Ovary (tissue), 10 donors: ENCODE measurements at regions of chr1 and their contacts with region 1.

Region 1: GRCh38 chr1:77978969-77979876 is at the start of gene FUBP1:
- DNase-seq: peak; percentile 95 to 98 (median 95)
- H3K4me3 ChIP-seq: peak within 1 kb of the TSS; percentile 60
- H3K27ac ChIP-seq: peak within 1 kb of the TSS; percentile 84 to 93
- H3K4me1 ChIP-seq: peaks cover 3% of the 10 kb centered on the region
- H3K27me3 ChIP-seq: no peaks in the 10 kb centered on the region
- CTCF ChIP-seq: peak; percentile 78 to 88 (median 85)
- EP300 ChIP-seq: no peak
- POLR2A ChIP-seq: peak; percentile 75
- total RNA-seq, gene FUBP1: 95.6 to 169 (median 149) TPM

Region 2: GRCh38 chr1:77857552-77857951 is 121.7 kb before region 1 on chr1:
- intact Hi-C with region 1: no loop called
- DNase-seq: no peak
- H3K4me3 ChIP-seq: no peak overlapping the region
- H3K27ac ChIP-seq: no peak overlapping the region
- H3K4me1 ChIP-seq: peaks cover 1% of the 10 kb centered on the region
- H3K27me3 ChIP-seq: no peaks in the 10 kb centered on the region
- CTCF ChIP-seq: no peak
- EP300 ChIP-seq: no peak
- POLR2A ChIP-seq: no peak

Region 3: GRCh38 chr1:78004719-78005447 is 25.7 kb after region 1 on chr1 and contains the start of gene DNAJB4:
- intact Hi-C with region 1: loop called in 1 of 4 experiments (anchors 2 kb)
- DNase-seq: peak in 4 of 5 donors; percentile 39 to 84 (median 68)
- H3K4me3 ChIP-seq: peak within 1 kb of the TSS; percentile 64
- H3K27ac ChIP-seq: peak within 1 kb of the TSS; percentile 72 to 84
- H3K4me1 ChIP-seq: no peaks in the 10 kb centered on the region
- H3K27me3 ChIP-seq: no peaks in the 10 kb centered on the region
- CTCF ChIP-seq: no peak
- EP300 ChIP-seq: no peak
- POLR2A ChIP-seq: peak; percentile 87
- total RNA-seq, gene DNAJB4: 20.2 to 48.6 (median 23.8) TPM